Left lung (tissue), 14 donors: ENCODE measurements at regions of chr15 and their contacts with region 1.

Region 1: DNA sequence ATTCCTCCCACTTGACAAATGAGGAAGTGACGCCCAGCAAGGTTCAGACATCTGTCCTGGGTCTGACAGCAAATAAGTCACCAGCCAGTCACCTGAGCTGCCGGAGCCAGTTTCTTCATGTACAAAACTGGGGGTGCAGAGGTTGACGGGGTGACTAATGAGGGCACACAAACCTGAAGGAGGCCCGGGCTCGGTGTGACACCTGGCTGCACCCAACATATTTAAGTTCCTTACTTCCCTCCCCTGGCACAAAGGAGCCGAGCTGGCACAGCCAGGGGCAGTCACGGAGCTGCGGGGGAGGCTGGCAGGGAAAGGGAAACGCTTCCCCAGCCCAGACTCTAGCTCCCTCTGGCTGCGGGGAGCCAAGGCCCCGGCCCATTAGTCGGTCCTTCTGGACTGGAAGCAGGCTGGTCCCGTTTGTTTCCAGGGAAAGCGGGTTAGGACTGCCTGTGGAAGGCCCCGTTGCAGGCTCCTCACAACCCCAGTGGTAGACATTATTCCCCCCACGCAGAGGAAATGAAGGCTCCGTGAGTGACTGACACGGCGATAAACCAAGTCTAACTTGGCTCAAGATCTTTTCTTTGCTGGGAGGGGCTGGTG is 2.3 kb downstream of the FBXL22 start:
- DNase-seq: peak in 2 of 4 donors; percentile 81 to 90
- ATAC-seq: peak; percentile 66
- H3K4me3 ChIP-seq: peak overlapping the region; percentile 57 to 62
- H3K27ac ChIP-seq: peak overlapping the region; percentile 79 to 90
- H3K4me1 ChIP-seq: peaks cover 21 to 45% of the 10 kb centered on the region in 2 donors
- H3K27me3 ChIP-seq: no peaks in the 10 kb centered on the region
- CTCF ChIP-seq: peak; percentile 43 to 46

Region 2: GRCh38 chr15:63504247-63504978 is 95.1 kb before region 1 on chr15 and contains the start of gene USP3:
- intact Hi-C with region 1: loop called in 1 of 2 experiments (anchors 10 kb)
- DNase-seq: peak; percentile 95 to 98 (median 96)
- ATAC-seq: peak; percentile 80
- H3K4me3 ChIP-seq: peak within 1 kb of the TSS; percentile 83 to 89
- H3K27ac ChIP-seq: peak within 1 kb of the TSS; percentile 99 to 100
- H3K4me1 ChIP-seq: peaks cover 42 to 75% of the 10 kb centered on the region in 2 donors
- H3K27me3 ChIP-seq: no peaks in the 10 kb centered on the region
- CTCF ChIP-seq: peak; percentile 28 to 73
- polyA plus RNA-seq, gene USP3: 37.4 to 44.9 (median 41.0) TPM